Breast epithelium (tissue), 4 donors: ENCODE measurements at regions of chr18 and their contacts with region 1.

Region 1: DNA sequence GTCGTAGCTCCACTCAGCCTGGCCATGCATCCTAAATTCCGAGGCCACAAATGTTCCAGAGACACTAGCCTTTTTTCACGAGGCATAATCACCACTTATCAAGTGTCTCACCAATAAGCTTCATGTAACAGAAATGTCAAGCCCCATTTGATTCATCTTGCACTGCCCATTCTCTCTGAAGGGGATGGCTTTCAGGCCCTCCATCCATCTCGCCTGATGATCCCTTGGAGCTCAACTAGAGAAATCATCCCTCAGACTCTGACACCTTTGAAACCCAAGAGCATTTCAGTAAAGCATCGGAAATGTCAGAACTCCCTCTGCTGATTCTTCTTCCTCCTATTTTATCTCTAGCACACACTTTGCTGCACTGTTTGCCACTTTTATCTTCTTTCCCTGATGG is 91.7 kb downstream of the DCC start:
- DNase-seq: no peak
- H3K4me3 ChIP-seq: no peak overlapping the region
- H3K27ac ChIP-seq: no peak overlapping the region
- H3K4me1 ChIP-seq: no peaks in the 10 kb centered on the region
- H3K27me3 ChIP-seq: no peaks in the 10 kb centered on the region
- CTCF ChIP-seq: no peak
- POLR2A ChIP-seq: no peak

Region 2: GRCh38 chr18:50594932-50595331 is 1836.8 kb before region 1 on chr18:
- intact Hi-C with region 1: loop called (anchors 5 kb)
- DNase-seq: no peak
- H3K4me3 ChIP-seq: no peak overlapping the region
- H3K27ac ChIP-seq: no peak overlapping the region
- H3K4me1 ChIP-seq: no peaks in the 10 kb centered on the region
- H3K27me3 ChIP-seq: no peaks in the 10 kb centered on the region
- CTCF ChIP-seq: no peak
- POLR2A ChIP-seq: no peak

Region 3: GRCh38 chr18:51070545-51070944 is 1361.1 kb before region 1 on chr18:
- intact Hi-C with region 1: no loop called
- DNase-seq: no peak
- H3K4me3 ChIP-seq: no peak overlapping the region
- H3K27ac ChIP-seq: no peak overlapping the region
- H3K4me1 ChIP-seq: no peaks in the 10 kb centered on the region
- H3K27me3 ChIP-seq: no peaks in the 10 kb centered on the region
- CTCF ChIP-seq: no peak
- POLR2A ChIP-seq: no peak

Region 4: GRCh38 chr18:52244658-52245057 is 187.0 kb before region 1 on chr18:
- intact Hi-C with region 1: no loop called
- DNase-seq: no peak
- H3K4me3 ChIP-seq: no peak overlapping the region
- H3K27ac ChIP-seq: no peak overlapping the region
- H3K4me1 ChIP-seq: no peaks in the 10 kb centered on the region
- H3K27me3 ChIP-seq: no peaks in the 10 kb centered on the region
- CTCF ChIP-seq: no peak
- POLR2A ChIP-seq: no peak

Region 5: GRCh38 chr18:52523566-52523965 is 91.9 kb after region 1 on chr18:
- intact Hi-C with region 1: no loop called
- DNase-seq: no peak
- H3K4me3 ChIP-seq: no peak overlapping the region
- H3K27ac ChIP-seq: no peak overlapping the region
- H3K4me1 ChIP-seq: no peaks in the 10 kb centered on the region
- H3K27me3 ChIP-seq: no peaks in the 10 kb centered on the region
- CTCF ChIP-seq: no peak
- POLR2A ChIP-seq: no peak

Region 6: GRCh38 chr18:52869963-52870907 is 438.6 kb after region 1 on chr18:
- intact Hi-C with region 1: no loop called
- DNase-seq: no peak
- H3K4me3 ChIP-seq: no peak overlapping the region
- H3K27ac ChIP-seq: no peak overlapping the region
- H3K4me1 ChIP-seq: no peaks in the 10 kb centered on the region
- H3K27me3 ChIP-seq: no peaks in the 10 kb centered on the region
- CTCF ChIP-seq: no peak
- POLR2A ChIP-seq: no peak